H1 (cell line): ENCODE measurements at regions of chr5 and their contacts with region 1.

Region 1: DNA sequence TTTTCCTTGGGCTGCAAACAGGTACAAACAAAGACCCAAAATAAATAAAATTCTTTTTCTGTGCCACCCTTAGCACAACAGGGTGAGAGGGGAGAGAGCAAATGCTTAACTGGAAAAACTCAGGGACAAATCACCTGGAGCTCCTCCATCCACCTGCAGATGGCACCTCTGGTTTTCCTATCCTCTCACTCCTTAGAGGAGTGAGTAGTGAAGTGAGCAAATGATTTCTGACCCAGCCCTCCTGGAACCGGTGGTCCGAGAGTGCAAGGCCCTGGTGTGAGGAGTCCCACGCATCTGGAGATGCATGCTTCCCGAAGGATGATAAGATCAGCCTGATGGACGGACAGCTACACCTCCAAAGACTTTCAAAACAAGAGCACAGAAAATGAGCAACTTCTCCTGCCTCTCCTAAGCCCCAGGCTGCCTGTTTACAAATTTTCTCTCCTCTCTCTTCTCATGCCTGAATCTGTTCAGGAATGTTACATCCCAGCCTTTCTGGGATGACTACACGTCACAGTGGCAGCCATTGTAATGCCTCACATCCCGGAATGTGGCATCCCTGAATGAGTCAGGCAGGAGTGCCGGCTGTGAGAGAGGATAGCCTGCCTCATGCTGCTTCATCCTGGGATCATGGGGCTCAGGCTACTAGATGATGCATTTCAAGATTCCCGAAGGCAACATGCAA is 86.4 kb downstream of the ADRB2 start:
- DNase-seq: peak; percentile 53 to 68
- H3K4me3 ChIP-seq: no peak overlapping the region
- H3K27ac ChIP-seq: no peak overlapping the region; the same call in none of the 2 replicates
- H3K4me1 ChIP-seq: peaks cover 4 to 17% (median 9%) of the 10 kb centered on the region in 4 experiments
- H3K27me3 ChIP-seq: no peaks in the 10 kb centered on the region
- CTCF ChIP-seq: peak; percentile 29 to 56 (median 52)
- EP300 ChIP-seq: peak in 1 of 2 experiments; percentile 82; a peak in 1 of 3 replicates
- POLR2A ChIP-seq: no peak
- RAD21 ChIP-seq: peak; percentile 65 to 72

Region 2: GRCh38 chr5:148713735-148714508 is 198.9 kb before region 1 on chr5:
- CTCF ChIA-PET with region 1: no interaction called
- POLR2A ChIA-PET with region 1: no interaction called
- DNase-seq: no peak
- H3K4me3 ChIP-seq: no peak overlapping the region
- H3K27ac ChIP-seq: no peak overlapping the region
- H3K4me1 ChIP-seq: no peaks in the 10 kb centered on the region
- H3K27me3 ChIP-seq: no peaks in the 10 kb centered on the region
- CTCF ChIP-seq: no peak
- EP300 ChIP-seq: no peak
- POLR2A ChIP-seq: no peak
- RAD21 ChIP-seq: no peak

Region 3: GRCh38 chr5:148939676-148940075 is 26.8 kb after region 1 on chr5:
- CTCF ChIA-PET with region 1: interaction called, 10 read pairs
- POLR2A ChIA-PET with region 1: no interaction called
- DNase-seq: no peak
- H3K4me3 ChIP-seq: no peak overlapping the region
- H3K27ac ChIP-seq: no peak overlapping the region
- H3K4me1 ChIP-seq: peaks cover 0 to 2% (median 0%) of the 10 kb centered on the region in 4 experiments; a peak in 2 of 7 replicates
- H3K27me3 ChIP-seq: no peaks in the 10 kb centered on the region
- CTCF ChIP-seq: no peak
- EP300 ChIP-seq: no peak
- POLR2A ChIP-seq: no peak
- RAD21 ChIP-seq: no peak

Region 4: DNA sequence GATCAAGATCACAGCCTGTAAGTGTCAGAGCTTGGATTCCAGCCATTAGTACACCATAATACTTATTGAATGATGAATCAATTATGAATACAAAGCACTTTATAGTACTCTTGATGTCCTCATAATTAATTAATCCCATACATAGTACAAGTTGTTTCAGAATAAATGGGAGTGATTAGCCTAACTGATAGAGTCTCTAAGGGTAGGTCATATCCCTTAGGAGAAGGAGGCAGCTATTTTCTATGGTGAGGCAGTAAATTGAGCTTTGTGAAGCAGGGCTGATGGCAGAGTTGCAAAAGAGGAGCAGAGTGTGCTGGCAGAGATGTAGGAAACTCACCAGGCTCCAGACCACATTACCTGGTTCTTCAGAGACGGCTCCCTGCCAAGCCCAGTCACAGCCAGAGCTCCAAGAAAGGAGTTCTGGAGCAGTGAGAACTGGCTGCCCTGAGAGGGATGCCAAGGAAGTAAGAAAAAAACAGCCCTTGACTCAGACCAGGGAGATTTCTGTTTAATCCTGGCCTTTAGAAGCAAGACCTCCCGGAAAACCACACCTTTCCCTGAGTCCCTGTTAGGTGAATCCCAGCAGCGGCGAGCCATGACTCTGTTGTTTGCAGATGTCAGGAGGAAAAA is 37.1 kb after region 1 on chr5:
- CTCF ChIA-PET with region 1: interaction called, 114 read pairs
- POLR2A ChIA-PET with region 1: interaction called, 3 read pairs
- DNase-seq: no peak
- H3K4me3 ChIP-seq: no peak overlapping the region
- H3K27ac ChIP-seq: no peak overlapping the region
- H3K4me1 ChIP-seq: peaks cover 0 to 12% (median 8%) of the 10 kb centered on the region in 4 experiments; a peak in 5 of 7 replicates
- H3K27me3 ChIP-seq: no peaks in the 10 kb centered on the region
- CTCF ChIP-seq: no peak
- EP300 ChIP-seq: no peak
- POLR2A ChIP-seq: no peak
- RAD21 ChIP-seq: no peak

Region 5: DNA sequence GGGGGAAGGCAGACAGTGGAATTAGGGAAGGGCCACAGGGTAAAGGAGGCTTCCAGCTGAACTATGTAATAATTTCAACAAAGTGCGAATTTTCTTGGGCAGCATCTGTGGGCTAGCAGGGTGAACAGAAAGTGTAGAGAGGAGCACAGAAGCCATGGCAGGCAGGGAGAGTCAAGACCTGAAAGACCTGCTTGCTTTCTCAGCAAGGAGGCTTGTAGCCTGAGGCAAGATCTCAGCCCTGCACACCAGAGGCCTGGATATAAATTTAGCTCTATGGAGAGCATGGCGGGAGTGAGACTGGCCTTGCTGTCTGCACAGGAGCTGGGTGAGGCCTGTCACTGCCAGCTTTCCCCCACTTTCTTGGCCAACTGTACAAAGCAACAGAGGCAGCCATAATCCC is 182.1 kb after region 1 on chr5:
- CTCF ChIA-PET with region 1: no interaction called
- POLR2A ChIA-PET with region 1: no interaction called
- DNase-seq: no peak
- H3K4me3 ChIP-seq: no peak overlapping the region
- H3K27ac ChIP-seq: no peak overlapping the region
- H3K4me1 ChIP-seq: no peaks in the 10 kb centered on the region
- H3K27me3 ChIP-seq: no peaks in the 10 kb centered on the region
- CTCF ChIP-seq: no peak
- EP300 ChIP-seq: no peak
- POLR2A ChIP-seq: no peak
- RAD21 ChIP-seq: no peak